Naive thymus-derived CD4-positive, alpha-beta T cell (primary cell): ENCODE measurements at regions of chr6 and their contacts with region 1.

Region 1: GRCh38 chr6:151323791-151324487 is 67.4 kb downstream of the ZBTB2 start:
- DNase-seq: peak; percentile 46 to 76 (median 65)
- ATAC-seq: peak; percentile 85
- H3K4me3 ChIP-seq: no peak overlapping the region
- H3K4me3 Mint-ChIP-seq: peak overlapping the region; percentile 22 to 87 (median 79)
- H3K27ac ChIP-seq: no peak overlapping the region
- H3K27ac Mint-ChIP-seq: peak overlapping the region in 1 of 9 donors; percentile 7
- H3K4me1 ChIP-seq: peaks cover 11 to 12% of the 10 kb centered on the region in 2 donors
- H3K4me1 Mint-ChIP-seq: peaks cover 9 to 27% (median 23%) of the 10 kb centered on the region in 7 donors
- H3K27me3 ChIP-seq: peaks cover 0 to 7% of the 10 kb centered on the region in 2 donors
- H3K27me3 Mint-ChIP-seq: peaks cover 27 to 62% (median 54%) of the 10 kb centered on the region in 5 donors

Region 2: GRCh38 chr6:151014404-151015100 is 309.4 kb before region 1 on chr6:
- CTCF ChIA-PET with region 1: interaction called, 32 read pairs
- POLR2A ChIA-PET with region 1: interaction called, 3 read pairs
- intact Hi-C with region 1: loop called (anchors 1 kb)
- DNase-seq: peak; percentile 17 to 61 (median 47)
- ATAC-seq: peak; percentile 83
- H3K4me3 ChIP-seq: no peak overlapping the region
- H3K4me3 Mint-ChIP-seq: peak overlapping the region in 1 of 10 donors; percentile 22
- H3K27ac ChIP-seq: no peak overlapping the region
- H3K27ac Mint-ChIP-seq: peak overlapping the region in 1 of 9 donors; percentile 41
- H3K4me1 ChIP-seq: no peaks in the 10 kb centered on the region
- H3K4me1 Mint-ChIP-seq: peaks cover 0 to 10% (median 0%) of the 10 kb centered on the region in 7 donors
- H3K27me3 ChIP-seq: no peaks in the 10 kb centered on the region
- H3K27me3 Mint-ChIP-seq: no peaks in the 10 kb centered on the region

Region 3: DNA sequence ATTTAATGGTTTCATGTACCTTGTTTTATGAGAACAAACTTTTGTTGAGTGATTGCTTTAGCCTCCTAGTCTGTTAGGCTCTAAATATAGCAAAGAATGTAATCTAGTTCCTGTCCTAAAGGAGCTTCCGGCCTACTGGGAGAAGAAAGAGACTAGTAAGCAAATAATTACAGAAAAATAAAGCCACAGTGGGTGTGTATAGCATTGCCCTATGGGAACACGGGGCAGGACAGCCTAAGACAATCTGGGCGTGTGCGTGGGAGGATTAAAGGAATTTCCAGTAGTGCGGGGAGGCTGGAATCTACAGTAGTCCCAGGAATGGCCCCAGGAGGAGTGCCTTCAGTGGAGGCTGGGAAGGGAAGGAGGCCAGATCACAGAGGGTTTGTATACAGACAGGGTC is 182.3 kb before region 1 on chr6:
- CTCF ChIA-PET with region 1: no interaction called
- POLR2A ChIA-PET with region 1: no interaction called
- intact Hi-C with region 1: no loop called
- DNase-seq: no peak
- ATAC-seq: no peak
- H3K4me3 ChIP-seq: no peak overlapping the region
- H3K4me3 Mint-ChIP-seq: no peak overlapping the region
- H3K27ac ChIP-seq: no peak overlapping the region
- H3K27ac Mint-ChIP-seq: no peak overlapping the region
- H3K4me1 ChIP-seq: no peaks in the 10 kb centered on the region
- H3K4me1 Mint-ChIP-seq: no peaks in the 10 kb centered on the region
- H3K27me3 ChIP-seq: no peaks in the 10 kb centered on the region
- H3K27me3 Mint-ChIP-seq: peaks cover 0 to 8% (median 3%) of the 10 kb centered on the region in 5 donors

Region 4: DNA sequence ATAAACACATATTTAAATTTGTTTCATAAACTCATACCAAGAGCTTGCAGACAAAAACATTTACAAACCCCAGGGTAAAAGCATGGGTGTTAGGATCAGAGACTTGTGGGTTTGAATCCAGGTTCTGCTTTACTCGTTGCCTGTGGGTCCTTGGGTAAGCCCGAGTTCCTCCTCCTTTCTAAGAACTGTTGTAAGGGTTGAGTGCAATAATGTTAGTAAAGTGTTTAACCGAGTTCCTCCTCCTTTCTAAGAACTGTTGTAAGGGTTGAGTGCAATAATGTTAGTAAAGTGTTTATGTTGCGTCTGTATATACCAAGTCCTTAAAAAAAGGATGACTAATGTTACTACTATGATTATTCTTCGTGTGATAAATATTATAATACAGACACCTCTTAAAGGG is 188.5 kb after region 1 on chr6:
- CTCF ChIA-PET with region 1: no interaction called
- POLR2A ChIA-PET with region 1: no interaction called
- intact Hi-C with region 1: no loop called
- DNase-seq: no peak
- ATAC-seq: peak; percentile 67
- H3K4me3 ChIP-seq: no peak overlapping the region
- H3K4me3 Mint-ChIP-seq: no peak overlapping the region
- H3K27ac ChIP-seq: no peak overlapping the region
- H3K27ac Mint-ChIP-seq: no peak overlapping the region
- H3K4me1 ChIP-seq: no peaks in the 10 kb centered on the region
- H3K4me1 Mint-ChIP-seq: no peaks in the 10 kb centered on the region
- H3K27me3 ChIP-seq: no peaks in the 10 kb centered on the region
- H3K27me3 Mint-ChIP-seq: peaks cover 3 to 5% (median 3%) of the 10 kb centered on the region in 5 donors